Calu3 (cell line): ENCODE measurements at regions of chr10 and their contacts with region 1.

Region 1: DNA sequence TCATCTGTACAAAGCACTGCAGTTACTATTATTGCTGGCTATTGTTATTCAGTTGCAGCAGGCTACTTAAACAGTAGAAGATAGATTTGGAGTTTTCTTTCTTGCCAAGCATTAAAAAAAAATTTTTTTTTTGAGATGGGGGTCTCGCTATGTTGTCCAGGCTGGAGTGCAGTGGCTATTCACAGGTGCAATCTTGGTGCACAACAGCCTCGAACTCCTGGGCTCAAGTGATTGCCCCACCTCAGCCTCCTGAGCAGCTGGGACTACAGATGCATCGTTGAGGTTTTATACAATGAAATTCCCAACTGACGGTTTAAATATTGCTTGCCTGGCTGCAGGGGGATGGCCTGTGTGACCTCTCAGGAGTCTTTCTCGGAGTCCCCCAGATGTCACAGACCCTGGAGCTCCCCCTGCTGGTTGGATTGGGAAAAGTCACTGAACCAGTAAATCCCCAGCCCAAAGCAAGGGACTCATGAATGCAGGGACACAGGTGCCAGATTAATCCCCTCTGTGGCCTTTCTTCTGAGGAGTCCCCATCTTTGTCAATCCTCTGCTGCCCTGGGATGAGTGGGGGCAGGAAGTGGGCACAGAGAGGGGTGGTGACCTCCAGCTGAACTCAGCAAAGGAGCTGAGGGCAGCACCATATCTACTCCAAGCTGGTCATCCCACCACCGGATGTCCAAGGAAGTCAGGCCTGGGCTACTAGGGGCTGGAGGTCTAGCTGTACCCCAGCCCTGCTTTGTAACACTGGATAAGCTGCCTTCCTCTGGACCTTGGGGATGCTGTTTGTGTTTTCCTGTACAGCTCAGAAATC is 149.6 kb downstream of the C10orf105 start:
- DNase-seq: peak; percentile 87
- H3K4me3 Mint-ChIP-seq: no peak overlapping the region
- H3K27ac Mint-ChIP-seq: no peak overlapping the region
- H3K4me1 Mint-ChIP-seq: no peaks in the 10 kb centered on the region
- H3K27me3 Mint-ChIP-seq: peaks cover 61% of the 10 kb centered on the region
- CTCF ChIP-seq: peak; percentile 92

Region 2: GRCh38 chr10:70799124-70799523 is 770.9 kb before region 1 on chr10:
- CTCF ChIA-PET with region 1: no interaction called
- intact Hi-C with region 1: no loop called
- DNase-seq: no peak
- H3K4me3 Mint-ChIP-seq: no peak overlapping the region
- H3K27ac Mint-ChIP-seq: no peak overlapping the region
- H3K4me1 Mint-ChIP-seq: peaks cover 3% of the 10 kb centered on the region
- H3K27me3 Mint-ChIP-seq: peaks cover 71% of the 10 kb centered on the region
- CTCF ChIP-seq: no peak

Region 3: DNA sequence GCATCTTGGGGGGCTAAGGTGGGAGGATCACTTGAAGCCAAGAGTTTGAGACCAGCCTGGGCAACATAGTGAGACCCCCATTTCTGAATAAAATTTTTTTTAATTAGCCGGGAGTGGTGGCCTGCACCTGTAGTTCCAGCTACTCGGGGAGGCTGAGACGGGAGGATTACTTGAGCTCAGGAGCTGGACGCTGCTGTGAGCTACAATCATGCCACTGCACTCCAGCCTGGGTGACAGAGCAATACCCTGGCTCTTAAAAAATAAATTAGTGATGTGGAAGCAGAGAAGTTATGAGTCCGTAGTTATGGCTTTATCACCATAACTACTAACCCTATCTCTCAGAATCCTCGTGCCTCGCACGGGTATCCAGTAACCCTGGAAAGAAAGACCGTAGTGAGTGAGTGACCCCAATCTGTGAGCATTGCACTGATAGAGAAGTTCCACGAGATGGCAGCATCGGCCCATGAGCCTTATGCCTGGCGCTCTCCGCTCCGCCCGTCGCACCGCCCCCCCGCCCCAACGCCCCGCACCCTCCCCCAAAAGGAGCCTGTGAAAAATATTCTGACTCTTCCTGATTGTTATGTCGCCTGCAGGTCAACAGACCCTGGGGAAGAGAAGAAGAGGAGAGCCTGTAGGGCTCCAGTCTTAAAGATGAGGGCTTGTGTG is 255.8 kb before region 1 on chr10:
- CTCF ChIA-PET with region 1: interaction called, 8 read pairs
- intact Hi-C with region 1: loop called (anchors 5 kb)
- DNase-seq: peak; percentile 62
- H3K4me3 Mint-ChIP-seq: no peak overlapping the region
- H3K27ac Mint-ChIP-seq: no peak overlapping the region
- H3K4me1 Mint-ChIP-seq: peaks cover 10% of the 10 kb centered on the region
- H3K27me3 Mint-ChIP-seq: peaks cover 43% of the 10 kb centered on the region
- CTCF ChIP-seq: peak; percentile 93

Region 4: DNA sequence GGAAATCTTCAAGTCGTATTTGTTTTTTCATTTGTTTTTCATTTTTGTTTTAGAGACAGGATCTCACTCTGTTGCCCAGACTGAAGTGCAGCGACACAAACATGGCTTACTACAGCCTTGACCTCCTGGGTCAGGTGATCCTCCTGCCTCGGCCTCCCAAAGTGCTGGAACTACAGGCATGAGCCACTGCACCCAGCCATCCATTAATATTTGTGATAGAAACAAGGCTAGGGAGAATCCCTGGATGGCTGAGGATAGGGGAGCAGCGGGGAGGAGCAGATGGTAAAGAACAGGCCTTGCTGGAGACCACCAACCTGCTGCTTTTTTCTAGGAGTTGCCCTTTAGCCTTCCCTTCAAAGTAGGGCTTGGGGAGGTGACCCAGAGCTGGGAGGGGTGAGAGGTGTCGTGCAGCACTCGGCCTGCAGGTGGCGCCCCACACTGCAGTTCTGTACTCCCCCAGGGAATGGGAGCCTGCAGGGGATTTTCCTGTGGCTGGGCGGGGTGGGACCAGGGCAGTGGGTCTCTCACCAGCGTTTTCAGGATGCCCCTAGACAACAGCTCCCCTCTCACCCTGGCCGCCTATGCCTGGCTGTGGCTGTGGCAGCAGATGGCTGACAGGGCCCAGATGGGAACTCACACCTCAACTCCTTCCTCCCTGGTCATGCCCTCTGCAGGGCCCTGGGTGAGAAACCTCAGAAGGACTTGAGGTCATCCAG is 185.9 kb before region 1 on chr10:
- CTCF ChIA-PET with region 1: interaction called, 5 read pairs
- intact Hi-C with region 1: loop called (anchors 2 kb)
- DNase-seq: peak; percentile 85
- H3K4me3 Mint-ChIP-seq: no peak overlapping the region
- H3K27ac Mint-ChIP-seq: no peak overlapping the region
- H3K4me1 Mint-ChIP-seq: peaks cover 2% of the 10 kb centered on the region
- H3K27me3 Mint-ChIP-seq: peaks cover 40% of the 10 kb centered on the region
- CTCF ChIP-seq: peak; percentile 94

Region 5: DNA sequence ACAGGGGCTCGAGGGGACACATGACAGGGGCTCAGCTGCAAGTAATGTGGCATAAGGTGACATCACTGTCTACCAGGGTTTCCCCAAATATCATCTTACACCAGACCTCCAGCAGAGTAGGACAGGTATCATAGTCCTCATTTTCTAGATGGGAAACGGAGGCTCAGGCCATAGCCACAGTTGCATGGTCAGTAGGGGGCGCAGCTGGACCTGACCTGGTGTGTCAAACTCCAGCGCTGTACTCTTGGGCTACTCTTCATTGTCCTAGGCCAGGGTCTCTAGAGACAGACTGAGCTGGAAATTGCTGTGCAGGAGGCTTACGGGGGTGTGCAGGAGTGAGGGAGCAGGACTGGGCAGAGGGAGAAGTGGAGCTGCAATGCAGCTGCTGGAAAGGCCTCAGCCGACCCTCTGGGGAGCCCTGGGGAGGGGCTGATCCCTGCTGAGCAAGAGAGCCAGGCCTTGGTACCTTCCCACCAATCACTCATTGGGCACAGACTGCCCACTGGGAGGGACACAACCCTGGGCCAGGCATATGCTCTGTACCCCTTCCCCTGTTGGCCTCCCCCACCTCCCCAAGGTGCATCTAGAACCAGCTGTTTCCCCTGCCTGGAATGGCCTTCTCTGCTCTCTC is 83.4 kb before region 1 on chr10:
- CTCF ChIA-PET with region 1: interaction called, 17 read pairs
- intact Hi-C with region 1: loop called (anchors 2 kb)
- DNase-seq: peak; percentile 83
- H3K4me3 Mint-ChIP-seq: no peak overlapping the region
- H3K27ac Mint-ChIP-seq: no peak overlapping the region
- H3K4me1 Mint-ChIP-seq: no peaks in the 10 kb centered on the region
- H3K27me3 Mint-ChIP-seq: peaks cover 96% of the 10 kb centered on the region
- CTCF ChIP-seq: peak; percentile 71

Region 6: GRCh38 chr10:71603150-71603549 is 33.2 kb after region 1 on chr10:
- CTCF ChIA-PET with region 1: no interaction called
- intact Hi-C with region 1: no loop called
- DNase-seq: no peak
- H3K4me3 Mint-ChIP-seq: no peak overlapping the region
- H3K27ac Mint-ChIP-seq: no peak overlapping the region
- H3K4me1 Mint-ChIP-seq: peaks cover 11% of the 10 kb centered on the region
- H3K27me3 Mint-ChIP-seq: peaks cover 21% of the 10 kb centered on the region
- CTCF ChIP-seq: no peak